HCT116 (cell line): ENCODE measurements at regions of chr1 and their contacts with region 1.

Region 1: GRCh38 chr1:152459596-152460528 is 45.8 kb upstream of the CRNN start:
- DNase-seq: peak; percentile 64
- ATAC-seq: peak; percentile 80
- H3K4me3 ChIP-seq: no peak overlapping the region
- H3K27ac ChIP-seq: no peak overlapping the region
- H3K4me1 ChIP-seq: peaks cover 0 to 11% of the 10 kb centered on the region in 2 experiments; a peak in 2 of 4 replicates
- H3K27me3 ChIP-seq: no peaks in the 10 kb centered on the region
- CTCF ChIP-seq: peak; percentile 39 to 88 (median 88); a peak in 4 of 6 replicates
- POLR2A ChIP-seq: no peak
- RAD21 ChIP-seq: no peak; the same call in 1 of the 2 replicates

Region 2: DNA sequence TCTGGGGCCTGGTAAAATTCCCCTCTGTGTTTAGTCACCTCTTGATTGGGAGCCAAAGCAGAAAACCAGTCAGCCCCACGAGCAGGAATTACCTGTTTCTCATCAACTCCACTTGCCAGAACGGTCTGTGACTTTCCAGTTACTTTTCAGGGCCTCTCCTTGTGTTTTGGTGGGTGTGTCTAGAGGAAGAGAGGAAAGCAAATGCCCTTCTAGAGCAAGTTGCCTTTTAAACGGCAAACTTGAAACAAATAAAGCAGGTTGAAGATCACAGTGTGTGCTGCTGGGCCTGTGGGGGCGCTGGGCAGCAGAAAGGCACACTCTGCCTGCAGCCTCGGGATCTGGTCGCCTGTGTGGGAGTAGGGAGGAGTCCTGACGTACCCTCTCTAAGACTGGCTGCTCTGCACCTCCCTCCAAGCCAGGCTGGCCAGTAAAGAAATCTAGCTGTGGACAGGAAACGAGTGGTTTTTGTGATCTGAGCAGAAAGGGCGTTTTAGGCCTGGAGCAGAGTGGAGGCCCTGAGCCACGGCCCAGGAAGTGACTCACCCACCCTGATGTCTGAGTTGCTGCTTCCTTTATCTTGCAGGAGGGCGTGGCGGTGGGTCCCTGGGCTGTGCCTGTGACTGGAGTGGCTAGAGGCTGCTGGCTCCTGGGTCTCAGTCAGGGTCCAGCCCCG is 412.0 kb before region 1 on chr1:
- CTCF ChIA-PET with region 1: interaction called, 16 read pairs
- POLR2A ChIA-PET with region 1: no interaction called
- RAD21 ChIA-PET with region 1: no interaction called
- intact Hi-C with region 1: loop called (anchors 1 kb)
- DNase-seq: peak; percentile 99
- ATAC-seq: peak; percentile 88
- H3K4me3 ChIP-seq: peak overlapping the region; percentile 45 to 48
- H3K27ac ChIP-seq: peak overlapping the region; percentile 98
- H3K4me1 ChIP-seq: peaks cover 29 to 61% of the 10 kb centered on the region in 2 experiments
- H3K27me3 ChIP-seq: no peaks in the 10 kb centered on the region
- CTCF ChIP-seq: peak; percentile 4 to 67 (median 55); a peak in 4 of 6 replicates
- POLR2A ChIP-seq: peak; percentile 86
- RAD21 ChIP-seq: peak; percentile 17; the same call in 1 of the 2 replicates

Region 3: GRCh38 chr1:152189657-152190442 is 270.0 kb before region 1 on chr1:
- CTCF ChIA-PET with region 1: interaction called, 143 read pairs
- POLR2A ChIA-PET with region 1: no interaction called
- RAD21 ChIA-PET with region 1: interaction called, 6 read pairs
- intact Hi-C with region 1: loop called (anchors 1 kb)
- DNase-seq: peak; percentile 63
- ATAC-seq: peak; percentile 66
- H3K4me3 ChIP-seq: no peak overlapping the region
- H3K27ac ChIP-seq: no peak overlapping the region
- H3K4me1 ChIP-seq: no peaks in the 10 kb centered on the region
- H3K27me3 ChIP-seq: peaks cover 6% of the 10 kb centered on the region; the same call in 1 of the 2 replicates
- CTCF ChIP-seq: peak; percentile 67 to 83 (median 82)
- POLR2A ChIP-seq: no peak
- RAD21 ChIP-seq: peak; percentile 88

Region 4: GRCh38 chr1:152398812-152399698 is 60.8 kb before region 1 on chr1:
- CTCF ChIA-PET with region 1: interaction called, 118 read pairs
- POLR2A ChIA-PET with region 1: interaction called, 5 read pairs
- RAD21 ChIA-PET with region 1: interaction called, 10 to 18 read pairs
- intact Hi-C with region 1: loop called (anchors 1 kb)
- DNase-seq: peak; percentile 63
- ATAC-seq: peak; percentile 95
- H3K4me3 ChIP-seq: no peak overlapping the region
- H3K27ac ChIP-seq: no peak overlapping the region
- H3K4me1 ChIP-seq: peaks cover 3 to 7% of the 10 kb centered on the region in 2 experiments; a peak in 2 of 4 replicates
- H3K27me3 ChIP-seq: peaks cover 25% of the 10 kb centered on the region
- CTCF ChIP-seq: peak; percentile 80 to 97 (median 81)
- POLR2A ChIP-seq: no peak
- RAD21 ChIP-seq: peak; percentile 65

Region 5: DNA sequence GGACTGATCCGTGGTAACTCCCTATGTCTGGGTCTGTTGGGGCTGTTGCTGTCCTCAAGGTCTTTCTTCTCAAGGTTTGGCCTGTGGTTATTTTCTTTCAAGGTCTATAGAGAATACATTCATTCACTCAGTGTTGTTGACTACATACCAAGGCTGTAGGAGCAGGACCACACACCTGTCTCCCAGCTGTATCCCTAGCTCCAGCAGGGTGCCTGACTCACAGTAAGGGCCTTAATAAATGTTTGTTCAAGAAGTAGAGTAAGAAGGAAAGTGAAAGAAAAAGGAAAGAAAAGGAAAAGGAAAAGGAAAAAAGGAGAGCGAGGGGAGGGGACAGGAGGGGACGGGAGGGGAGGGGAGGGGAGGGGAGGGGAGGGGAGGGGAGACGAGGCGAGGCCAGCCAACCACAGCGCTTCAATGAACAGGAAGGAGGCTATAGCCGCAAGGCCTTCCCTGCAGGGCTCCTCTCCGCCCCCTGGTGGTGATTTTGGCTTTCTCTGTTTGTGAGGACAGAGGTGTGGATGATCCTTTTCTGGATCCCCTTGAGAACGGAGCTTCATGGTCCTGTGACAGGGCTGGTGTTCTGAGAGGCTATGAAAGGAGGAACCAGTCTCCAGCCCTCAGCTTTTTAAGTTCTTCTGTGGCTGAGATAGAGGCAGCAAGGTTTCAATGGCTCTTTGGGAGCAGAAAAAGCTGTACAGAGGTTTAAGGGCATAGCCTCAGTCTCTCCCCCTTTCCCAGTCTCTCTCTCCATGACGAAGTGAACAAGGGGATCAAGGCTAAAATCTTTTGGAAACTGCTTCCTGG is 20.1 kb after region 1 on chr1:
- CTCF ChIA-PET with region 1: interaction called, 22 read pairs
- POLR2A ChIA-PET with region 1: no interaction called
- RAD21 ChIA-PET with region 1: no interaction called
- intact Hi-C with region 1: no loop called
- DNase-seq: peak; percentile 63
- ATAC-seq: peak; percentile 100
- H3K4me3 ChIP-seq: no peak overlapping the region
- H3K27ac ChIP-seq: no peak overlapping the region
- H3K4me1 ChIP-seq: 0 out of 4 replicates have a peak, but pooled peaks cover 0 to 3% of the 10 kb centered on the region in 2 experiments
- H3K27me3 ChIP-seq: no peaks in the 10 kb centered on the region
- CTCF ChIP-seq: peak; percentile 34 to 88 (median 68); a peak in 5 of 6 replicates
- POLR2A ChIP-seq: no peak
- RAD21 ChIP-seq: 0 out of 2 replicates have a peak, but pooled peaks have one; percentile 8

Region 6: DNA sequence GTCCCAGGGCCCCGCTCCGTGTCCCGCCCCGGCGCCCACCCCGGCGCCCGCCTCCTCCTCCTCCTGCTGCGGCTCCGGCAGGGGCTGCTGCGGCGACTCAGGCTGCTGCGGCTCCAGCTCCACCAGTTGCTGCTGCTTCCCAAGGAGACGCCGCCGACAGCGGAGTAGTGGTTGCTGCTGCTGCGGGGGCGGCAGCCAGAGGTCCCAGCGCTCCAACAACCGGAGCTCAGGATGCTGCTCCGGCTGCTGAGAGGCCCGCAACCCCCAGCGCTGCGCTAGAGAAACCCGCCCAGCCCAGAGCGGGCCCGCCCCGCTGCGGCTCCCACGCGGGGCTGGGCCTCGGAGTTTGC is 55.5 kb after region 1 on chr1:
- CTCF ChIA-PET with region 1: no interaction called
- POLR2A ChIA-PET with region 1: no interaction called
- RAD21 ChIA-PET with region 1: no interaction called
- intact Hi-C with region 1: no loop called
- DNase-seq: no peak
- ATAC-seq: no peak
- H3K4me3 ChIP-seq: no peak overlapping the region
- H3K27ac ChIP-seq: no peak overlapping the region
- H3K4me1 ChIP-seq: peaks cover 0 to 15% of the 10 kb centered on the region in 2 experiments; a peak in 2 of 4 replicates
- H3K27me3 ChIP-seq: peaks cover 6% of the 10 kb centered on the region; the same call in 1 of the 2 replicates
- CTCF ChIP-seq: no peak
- POLR2A ChIP-seq: no peak
- RAD21 ChIP-seq: no peak